ENCODE measurements at regions of chr19 and their contacts with region 1.

Region 1: DNA sequence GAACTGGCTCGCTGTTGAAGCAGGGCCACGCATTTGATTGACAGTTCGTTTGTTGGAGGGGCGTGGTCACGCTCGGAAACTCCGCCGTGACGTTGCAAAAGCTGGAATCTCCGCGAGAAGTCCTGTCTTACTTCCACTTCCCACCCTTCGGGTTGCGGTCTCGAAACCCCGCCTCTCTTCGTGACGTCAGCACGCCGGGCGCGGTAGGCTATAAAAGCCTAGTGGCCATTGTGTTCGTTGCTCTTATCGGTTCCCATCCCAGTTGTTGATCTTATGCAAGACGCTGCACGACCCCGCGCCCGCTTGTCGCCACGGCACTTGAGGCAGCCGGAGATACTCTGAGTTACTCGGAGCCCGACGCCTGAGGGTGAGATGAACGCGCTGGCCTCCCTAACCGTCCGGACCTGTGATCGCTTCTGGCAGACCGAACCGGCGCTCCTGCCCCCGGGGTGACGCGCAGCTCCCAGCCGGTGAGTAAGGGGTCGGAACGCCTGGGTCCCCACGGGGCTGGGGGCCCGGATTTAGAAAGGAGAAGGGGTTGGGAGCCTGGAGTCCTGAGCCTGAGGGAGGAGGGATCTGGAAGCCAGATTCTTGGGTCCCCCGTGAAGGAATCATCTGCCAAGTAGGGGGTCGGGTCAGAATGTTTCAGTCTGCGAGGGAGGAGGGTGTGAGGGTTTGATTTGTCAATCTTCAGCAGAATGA is at the start of gene PPP1R15A:
- DNase-seq: peak; percentile 99
- H3K4me3 Mint-ChIP-seq: peak within 1 kb of the TSS; percentile 99
- H3K27ac Mint-ChIP-seq: peak within 1 kb of the TSS; percentile 99
- H3K4me1 Mint-ChIP-seq: peaks cover 34% of the 10 kb centered on the region
- H3K27me3 Mint-ChIP-seq: no peaks in the 10 kb centered on the region
- total RNA-seq, gene PPP1R15A: 96.5 to 97.4 TPM

Region 2: DNA sequence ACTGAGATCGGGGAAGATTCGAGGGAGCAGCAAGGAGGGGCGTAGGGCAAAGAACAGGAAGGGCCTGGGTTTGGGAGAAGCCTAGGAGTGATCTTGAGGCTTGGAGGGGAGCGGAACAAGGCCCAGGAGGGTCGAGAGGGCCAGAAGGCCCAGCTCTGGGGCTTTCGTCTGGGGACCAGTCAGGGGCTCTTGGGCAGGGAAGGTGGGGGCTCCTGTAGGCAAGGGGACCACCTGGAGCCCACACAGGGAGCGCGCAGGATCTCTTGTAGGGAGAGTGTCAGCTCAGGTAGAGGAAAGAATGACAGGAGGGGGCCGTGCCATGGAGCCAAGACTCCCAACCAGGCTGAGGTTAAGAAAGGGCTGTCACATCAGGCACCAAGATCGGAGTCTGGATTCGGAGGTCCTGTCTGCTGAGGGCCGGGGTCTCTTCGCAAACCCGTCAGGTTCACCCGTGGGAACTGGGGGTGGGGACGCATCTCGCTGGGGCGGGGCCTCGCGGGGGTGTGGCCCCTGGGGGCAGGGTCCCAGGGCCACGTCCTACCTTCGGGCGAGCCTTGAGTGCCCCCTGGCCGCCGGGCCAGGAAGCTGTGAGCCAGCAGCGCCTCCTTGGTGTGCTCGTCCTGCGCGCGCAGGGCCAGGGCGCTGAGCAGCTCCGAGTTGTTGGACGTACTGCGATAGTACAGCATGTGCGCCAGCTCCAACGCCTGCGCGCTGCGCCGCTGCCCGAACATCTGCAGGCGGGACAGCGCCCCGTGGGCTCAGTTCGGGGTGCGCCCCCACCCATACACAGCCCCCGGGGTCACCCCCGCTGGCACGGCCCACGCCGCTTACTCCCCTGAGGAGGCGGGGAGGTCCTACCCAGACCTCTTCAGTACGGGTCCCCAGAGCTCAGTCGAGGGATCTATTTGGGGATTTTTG is 538.6 kb before region 1 on chr19:
- CTCF ChIA-PET with region 1: no interaction called
- intact Hi-C with region 1: loop called (anchors 5 kb)
- DNase-seq: peak; percentile 95
- H3K4me3 Mint-ChIP-seq: peak overlapping the region; percentile 87
- H3K27ac Mint-ChIP-seq: peak overlapping the region; percentile 92
- H3K4me1 Mint-ChIP-seq: peaks cover 47% of the 10 kb centered on the region
- H3K27me3 Mint-ChIP-seq: no peaks in the 10 kb centered on the region

Region 3: GRCh38 chr19:48812094-48812929 is 60.0 kb before region 1 on chr19:
- CTCF ChIA-PET with region 1: no interaction called
- intact Hi-C with region 1: loop called (anchors 1 kb)
- DNase-seq: peak; percentile 52
- H3K4me3 Mint-ChIP-seq: peak overlapping the region; percentile 68
- H3K27ac Mint-ChIP-seq: no peak overlapping the region
- H3K4me1 Mint-ChIP-seq: peaks cover 31% of the 10 kb centered on the region
- H3K27me3 Mint-ChIP-seq: no peaks in the 10 kb centered on the region

Region 4: GRCh38 chr19:48826606-48827020 is 45.7 kb before region 1 on chr19:
- CTCF ChIA-PET with region 1: no interaction called
- intact Hi-C with region 1: no loop called
- DNase-seq: no peak
- H3K4me3 Mint-ChIP-seq: no peak overlapping the region
- H3K27ac Mint-ChIP-seq: no peak overlapping the region
- H3K4me1 Mint-ChIP-seq: no peaks in the 10 kb centered on the region
- H3K27me3 Mint-ChIP-seq: no peaks in the 10 kb centered on the region

Region 5: DNA sequence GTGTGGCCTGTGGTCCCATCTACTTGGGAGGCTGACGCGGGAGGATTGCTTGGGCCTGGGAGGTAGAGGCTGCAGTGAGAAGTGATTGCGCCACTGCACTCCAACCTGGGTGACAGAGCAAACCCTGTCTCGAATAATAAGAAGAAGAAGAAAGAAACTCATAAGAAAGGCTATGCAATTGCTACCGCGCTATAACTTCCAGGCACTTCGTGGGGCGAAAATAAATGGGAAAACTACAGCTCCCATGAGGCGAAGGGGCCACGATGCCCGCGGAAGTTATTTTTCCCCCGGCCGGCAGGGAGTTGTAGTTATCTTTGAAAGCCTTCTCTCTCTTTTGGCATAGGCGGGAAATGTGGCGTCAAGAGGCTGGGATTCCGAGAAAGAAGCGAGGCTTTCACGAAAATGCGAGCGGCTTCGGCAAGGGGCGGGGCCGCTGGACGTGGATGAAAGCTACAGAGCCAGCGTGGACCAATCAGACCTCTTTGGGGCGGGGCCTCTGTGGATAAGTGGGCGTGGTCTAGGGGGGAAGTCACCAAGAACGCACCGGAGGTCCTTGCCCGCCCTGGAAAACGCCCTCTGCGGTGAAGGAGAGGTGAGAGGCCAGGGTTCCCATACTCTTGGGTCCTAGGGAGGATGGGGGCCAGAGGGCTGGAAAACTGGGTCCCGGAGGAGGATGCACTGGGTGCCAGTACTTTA is 27.6 kb after region 1 on chr19 and contains the start of gene NUCB1:
- CTCF ChIA-PET with region 1: no interaction called
- intact Hi-C with region 1: loop called (anchors 1 kb)
- DNase-seq: peak; percentile 100
- H3K4me3 Mint-ChIP-seq: peak within 1 kb of the TSS; percentile 97
- H3K27ac Mint-ChIP-seq: peak within 1 kb of the TSS; percentile 96
- H3K4me1 Mint-ChIP-seq: peaks cover 38% of the 10 kb centered on the region
- H3K27me3 Mint-ChIP-seq: peaks cover 5% of the 10 kb centered on the region
- total RNA-seq, gene NUCB1: 172 to 182 TPM

Region 6: GRCh38 chr19:48965040-48965805 is 92.9 kb after region 1 on chr19 and contains the start of gene FTL:
- CTCF ChIA-PET with region 1: interaction called, 11 read pairs
- intact Hi-C with region 1: loop called (anchors 1 kb)
- DNase-seq: peak; percentile 93
- H3K4me3 Mint-ChIP-seq: peak within 1 kb of the TSS; percentile 100
- H3K27ac Mint-ChIP-seq: peak within 1 kb of the TSS; percentile 97
- H3K4me1 Mint-ChIP-seq: peaks cover 56% of the 10 kb centered on the region
- H3K27me3 Mint-ChIP-seq: no peaks in the 10 kb centered on the region
- total RNA-seq, gene FTL: 1,093 to 1,120 TPM

Region 7: DNA sequence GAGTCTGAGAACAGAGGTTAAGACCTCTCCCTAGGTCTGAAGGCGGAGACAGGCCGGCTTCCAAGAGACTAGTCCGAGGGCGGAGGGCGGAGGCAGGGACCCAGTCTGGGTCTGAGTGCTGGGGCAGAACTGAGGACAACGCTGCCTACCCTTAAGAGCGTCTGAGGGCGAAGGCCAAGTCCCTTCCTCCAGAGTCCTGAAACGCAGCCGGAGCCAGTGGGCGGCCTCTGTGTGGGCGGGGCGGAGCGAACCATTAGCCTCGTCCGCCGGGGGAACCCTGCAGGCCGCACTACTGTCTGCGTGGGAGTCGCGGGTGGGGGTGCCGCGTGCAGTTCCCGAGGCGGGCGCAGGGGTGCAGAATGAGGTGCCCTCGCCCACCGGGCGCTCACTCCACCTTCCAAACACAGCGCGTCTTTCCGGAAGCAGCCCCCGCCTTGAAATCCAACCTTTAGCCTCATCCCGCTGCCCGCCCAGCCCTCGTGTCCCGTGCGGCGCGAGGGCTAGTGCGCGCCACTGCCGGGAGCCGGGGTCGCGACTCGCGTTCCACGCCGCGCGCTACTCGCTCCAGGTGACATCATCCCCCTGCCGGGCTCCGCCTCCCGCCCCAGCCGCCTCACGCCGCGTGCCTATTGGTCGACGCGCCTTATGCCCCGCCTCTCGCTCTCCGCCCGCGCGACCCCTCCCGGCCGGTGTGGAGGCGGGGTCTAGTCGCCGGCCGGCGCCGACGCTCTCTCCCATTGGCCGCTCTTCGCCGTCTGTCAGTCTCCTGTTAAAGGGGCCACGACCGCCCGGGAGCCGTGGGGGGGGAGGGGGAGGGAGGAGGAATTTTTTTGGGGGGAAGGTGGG is 246.5 kb after region 1 on chr19 and contains the start of gene C19orf73:
- CTCF ChIA-PET with region 1: no interaction called
- intact Hi-C with region 1: loop called (anchors 10 kb)
- DNase-seq: peak; percentile 95
- H3K4me3 Mint-ChIP-seq: peak within 1 kb of the TSS; percentile 83
- H3K27ac Mint-ChIP-seq: peak within 1 kb of the TSS; percentile 86
- H3K4me1 Mint-ChIP-seq: peaks cover 32% of the 10 kb centered on the region
- H3K27me3 Mint-ChIP-seq: peaks cover 7% of the 10 kb centered on the region
- total RNA-seq, gene C19orf73: 1.5 to 1.9 TPM